ENCODE measurements at regions of chr1 and their contacts with region 1.

Region 1: GRCh38 chr1:167803358-167804207 is 81.8 kb downstream of the MPZL1 start:
- DNase-seq: peak; percentile 94
- H3K4me3 ChIP-seq: no peak overlapping the region
- H3K27ac ChIP-seq: no peak overlapping the region
- H3K4me1 ChIP-seq: peaks cover 0 to 14% (median 4%) of the 10 kb centered on the region in 4 donors
- H3K27me3 ChIP-seq: no peaks in the 10 kb centered on the region
- CTCF ChIP-seq: peak; percentile 93 to 97 (median 94)
- EP300 ChIP-seq: no peak
- POLR2A ChIP-seq: no peak

Region 2: GRCh38 chr1:167715157-167715999 is 88.2 kb before region 1 on chr1:
- in situ Hi-C with region 1: no loop called
- intact Hi-C with region 1: loop called (anchors 5 kb)
- DNase-seq: peak; percentile 90
- H3K4me3 ChIP-seq: peak overlapping the region; percentile 35 to 62 (median 47)
- H3K27ac ChIP-seq: peak overlapping the region; percentile 83 to 92 (median 88)
- H3K4me1 ChIP-seq: peaks cover 0 to 24% (median 13%) of the 10 kb centered on the region in 4 donors
- H3K27me3 ChIP-seq: no peaks in the 10 kb centered on the region
- CTCF ChIP-seq: peak; percentile 78 to 98 (median 83)
- EP300 ChIP-seq: no peak
- POLR2A ChIP-seq: no peak

Region 3: GRCh38 chr1:167734227-167734626 is 69.4 kb before region 1 on chr1:
- in situ Hi-C with region 1: loop called in 1 of 4 experiments (anchors 5 kb)
- intact Hi-C with region 1: no loop called
- DNase-seq: no peak
- H3K4me3 ChIP-seq: no peak overlapping the region
- H3K27ac ChIP-seq: no peak overlapping the region
- H3K4me1 ChIP-seq: peaks cover 11 to 43% (median 34%) of the 10 kb centered on the region in 4 donors
- H3K27me3 ChIP-seq: no peaks in the 10 kb centered on the region
- CTCF ChIP-seq: no peak
- EP300 ChIP-seq: no peak
- POLR2A ChIP-seq: no peak